OCI-LY7 (cell line): ENCODE measurements at regions of chr3 and their contacts with region 1.

Region 1: DNA sequence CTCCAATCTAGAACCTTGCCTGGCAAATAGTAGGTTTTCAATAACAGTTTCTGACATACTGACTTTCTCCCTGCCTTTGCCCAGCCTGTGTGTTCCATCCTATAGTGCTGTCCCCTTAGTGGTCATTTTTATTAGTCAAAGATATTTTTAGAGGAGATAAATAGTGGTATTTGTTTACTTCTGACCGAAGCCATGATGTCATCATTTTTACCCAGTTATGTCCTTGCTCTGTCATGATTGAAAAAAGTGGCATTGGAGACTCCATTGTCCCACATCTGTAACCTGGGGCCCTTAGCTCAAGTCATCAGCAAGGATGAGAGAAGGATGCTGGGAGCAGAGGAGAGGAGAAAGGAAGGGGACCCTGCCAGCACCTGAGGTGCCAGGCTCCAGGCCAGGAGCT is 80.6 kb upstream of the ATP2B2 start:
- DNase-seq: no peak
- H3K4me3 ChIP-seq: no peak overlapping the region
- H3K27ac ChIP-seq: no peak overlapping the region
- H3K4me1 ChIP-seq: no peaks in the 10 kb centered on the region
- CTCF ChIP-seq: no peak

Region 2: GRCh38 chr3:10570196-10570946 is 15.6 kb before region 1 on chr3:
- CTCF ChIA-PET with region 1: no interaction called
- POLR2A ChIA-PET with region 1: interaction called, 15 read pairs
- intact Hi-C with region 1: no loop called
- DNase-seq: no peak
- H3K4me3 ChIP-seq: no peak overlapping the region
- H3K27ac ChIP-seq: no peak overlapping the region
- H3K4me1 ChIP-seq: no peaks in the 10 kb centered on the region
- CTCF ChIP-seq: no peak

Region 3: DNA sequence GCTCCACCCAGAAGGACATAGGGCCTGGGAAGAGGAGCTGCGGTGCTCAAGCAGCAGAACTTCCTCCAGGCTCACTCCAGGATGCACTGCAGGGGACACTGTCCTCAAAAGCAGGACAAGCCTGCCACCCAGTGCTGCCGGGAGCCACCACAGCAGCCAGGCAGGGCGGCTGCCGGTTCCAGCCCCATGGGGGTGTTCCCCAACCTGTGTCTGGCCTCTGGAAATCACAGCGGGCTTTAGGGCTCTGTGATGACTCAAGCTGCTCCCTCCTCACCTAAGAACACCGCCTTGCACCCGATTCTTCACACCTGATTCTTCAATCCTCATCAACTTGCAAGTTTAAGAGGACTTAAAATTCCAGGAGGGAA is 158.1 kb after region 1 on chr3:
- CTCF ChIA-PET with region 1: no interaction called
- POLR2A ChIA-PET with region 1: no interaction called
- intact Hi-C with region 1: no loop called
- DNase-seq: peak; percentile 12
- H3K4me3 ChIP-seq: no peak overlapping the region
- H3K27ac ChIP-seq: no peak overlapping the region
- H3K4me1 ChIP-seq: no peaks in the 10 kb centered on the region
- CTCF ChIP-seq: 0 out of 2 replicates have a peak, but pooled peaks have one; percentile 17